Activated CD4-positive, alpha-beta memory T cell treated with anti-CD3 and anti-CD28 coated beads for 36 hours (primary cell): ENCODE measurements at regions of chr19 and their contacts with region 1.

Region 1: DNA sequence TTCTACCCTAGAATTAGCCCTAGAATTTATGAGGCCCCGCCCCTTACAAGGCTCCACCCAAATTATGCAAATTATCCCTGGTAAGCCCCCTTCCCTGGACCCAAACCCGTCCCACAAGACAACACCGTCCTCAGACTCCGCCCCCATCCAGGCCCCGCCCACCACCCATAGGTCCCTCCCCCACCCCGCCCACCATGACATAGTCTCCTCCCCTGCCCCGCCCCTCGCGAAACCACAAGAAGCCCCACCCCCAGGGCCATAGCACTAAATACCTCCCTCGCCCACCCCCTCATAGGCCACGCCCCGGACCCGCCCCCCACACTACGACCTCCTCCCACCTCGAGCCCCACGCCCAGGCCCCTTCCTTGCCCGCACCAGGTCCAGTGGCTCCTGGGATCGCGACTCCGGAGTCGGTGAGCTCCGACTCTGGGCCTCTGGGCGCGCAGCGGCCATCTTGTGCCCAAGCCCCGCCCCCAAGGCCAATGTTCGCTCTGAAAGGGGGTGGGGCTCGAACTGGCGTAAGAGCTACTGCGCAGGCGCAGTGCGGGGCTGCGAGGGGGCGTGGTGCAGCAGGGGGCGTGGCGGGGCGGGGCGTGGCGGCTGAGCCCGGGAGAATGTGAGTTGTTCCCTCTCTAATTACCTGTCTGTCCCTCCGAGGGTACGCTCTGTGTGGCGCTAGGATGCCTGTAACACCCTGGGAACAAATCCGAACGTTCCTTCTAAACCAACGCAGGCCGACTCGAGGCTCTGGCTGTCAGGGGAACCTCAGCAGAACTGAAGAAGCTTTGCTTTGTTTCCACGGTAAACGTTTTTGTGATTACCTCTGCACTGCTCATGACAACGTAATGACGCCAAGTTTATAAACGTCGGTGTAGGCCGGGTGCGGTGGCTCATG is at the start of gene ZNF784:
- DNase-seq: peak; percentile 94
- H3K4me3 Mint-ChIP-seq: peak within 1 kb of the TSS; percentile 83
- H3K27ac Mint-ChIP-seq: peak within 1 kb of the TSS; percentile 94
- H3K4me1 Mint-ChIP-seq: peaks cover 46% of the 10 kb centered on the region
- H3K27me3 Mint-ChIP-seq: no peaks in the 10 kb centered on the region
- total RNA-seq, gene ZNF784: 3.9 to 4.4 TPM

Region 2: DNA sequence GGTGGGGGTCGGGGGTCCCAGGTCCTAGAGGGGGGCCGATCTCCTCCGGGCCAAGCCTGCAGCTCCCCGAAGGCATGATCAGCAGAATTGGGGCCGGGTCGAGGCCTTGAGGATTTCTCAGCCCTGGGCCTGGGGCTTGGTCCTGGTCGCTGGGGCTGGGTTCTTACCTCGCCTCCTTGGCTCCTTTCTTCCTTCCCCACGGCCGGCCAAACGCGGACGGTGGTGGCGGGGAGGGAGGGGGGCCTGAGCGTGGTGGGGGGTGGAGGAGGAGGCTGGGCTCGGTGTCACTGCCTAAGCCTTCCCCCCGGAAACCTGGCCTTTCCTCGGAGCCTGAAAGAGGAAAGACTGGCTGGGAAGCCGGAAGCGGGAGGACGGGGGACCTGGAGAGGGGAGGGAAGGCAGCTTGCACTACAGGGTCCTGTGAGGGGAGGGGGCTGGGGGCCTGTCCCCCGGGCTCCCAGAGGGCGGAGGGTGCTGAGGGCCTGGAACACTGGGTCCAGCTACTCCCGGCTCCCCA is 43.7 kb before region 1 on chr19 and contains the start of gene ZNF579:
- CTCF ChIA-PET with region 1: interaction called, 3 read pairs
- POLR2A ChIA-PET with region 1: no interaction called
- intact Hi-C with region 1: loop called (anchors 1 kb)
- DNase-seq: peak; percentile 88
- H3K4me3 Mint-ChIP-seq: peak within 1 kb of the TSS; percentile 76
- H3K27ac Mint-ChIP-seq: peak within 1 kb of the TSS; percentile 78
- H3K4me1 Mint-ChIP-seq: peaks cover 23% of the 10 kb centered on the region
- H3K27me3 Mint-ChIP-seq: no peaks in the 10 kb centered on the region
- total RNA-seq, gene ZNF579: 6.6 to 6.7 TPM

Region 3: GRCh38 chr19:55599468-55600279 is 24.7 kb before region 1 on chr19 and contains the start of gene FIZ1:
- CTCF ChIA-PET with region 1: interaction called, 3 read pairs
- POLR2A ChIA-PET with region 1: interaction called, 20 read pairs
- intact Hi-C with region 1: loop called (anchors 1 kb)
- DNase-seq: peak; percentile 98
- H3K4me3 Mint-ChIP-seq: peak within 1 kb of the TSS; percentile 91
- H3K27ac Mint-ChIP-seq: peak within 1 kb of the TSS; percentile 95
- H3K4me1 Mint-ChIP-seq: peaks cover 25% of the 10 kb centered on the region
- H3K27me3 Mint-ChIP-seq: no peaks in the 10 kb centered on the region
- total RNA-seq, gene FIZ1: 13.8 to 13.9 TPM

Region 4: GRCh38 chr19:55643348-55644176 is 19.2 kb after region 1 on chr19 and contains the start of gene ZNF581:
- CTCF ChIA-PET with region 1: interaction called, 26 read pairs
- POLR2A ChIA-PET with region 1: interaction called, 4 read pairs
- intact Hi-C with region 1: no loop called
- DNase-seq: peak; percentile 90
- H3K4me3 Mint-ChIP-seq: peak within 1 kb of the TSS; percentile 85
- H3K27ac Mint-ChIP-seq: peak within 1 kb of the TSS; percentile 98
- H3K4me1 Mint-ChIP-seq: peaks cover 46% of the 10 kb centered on the region
- H3K27me3 Mint-ChIP-seq: no peaks in the 10 kb centered on the region
- total RNA-seq, gene ZNF581: 19.2 to 20.1 TPM